Right lobe of liver (tissue), 6 donors: ENCODE measurements at regions of chr20 and their contacts with region 1.

Region 1: DNA sequence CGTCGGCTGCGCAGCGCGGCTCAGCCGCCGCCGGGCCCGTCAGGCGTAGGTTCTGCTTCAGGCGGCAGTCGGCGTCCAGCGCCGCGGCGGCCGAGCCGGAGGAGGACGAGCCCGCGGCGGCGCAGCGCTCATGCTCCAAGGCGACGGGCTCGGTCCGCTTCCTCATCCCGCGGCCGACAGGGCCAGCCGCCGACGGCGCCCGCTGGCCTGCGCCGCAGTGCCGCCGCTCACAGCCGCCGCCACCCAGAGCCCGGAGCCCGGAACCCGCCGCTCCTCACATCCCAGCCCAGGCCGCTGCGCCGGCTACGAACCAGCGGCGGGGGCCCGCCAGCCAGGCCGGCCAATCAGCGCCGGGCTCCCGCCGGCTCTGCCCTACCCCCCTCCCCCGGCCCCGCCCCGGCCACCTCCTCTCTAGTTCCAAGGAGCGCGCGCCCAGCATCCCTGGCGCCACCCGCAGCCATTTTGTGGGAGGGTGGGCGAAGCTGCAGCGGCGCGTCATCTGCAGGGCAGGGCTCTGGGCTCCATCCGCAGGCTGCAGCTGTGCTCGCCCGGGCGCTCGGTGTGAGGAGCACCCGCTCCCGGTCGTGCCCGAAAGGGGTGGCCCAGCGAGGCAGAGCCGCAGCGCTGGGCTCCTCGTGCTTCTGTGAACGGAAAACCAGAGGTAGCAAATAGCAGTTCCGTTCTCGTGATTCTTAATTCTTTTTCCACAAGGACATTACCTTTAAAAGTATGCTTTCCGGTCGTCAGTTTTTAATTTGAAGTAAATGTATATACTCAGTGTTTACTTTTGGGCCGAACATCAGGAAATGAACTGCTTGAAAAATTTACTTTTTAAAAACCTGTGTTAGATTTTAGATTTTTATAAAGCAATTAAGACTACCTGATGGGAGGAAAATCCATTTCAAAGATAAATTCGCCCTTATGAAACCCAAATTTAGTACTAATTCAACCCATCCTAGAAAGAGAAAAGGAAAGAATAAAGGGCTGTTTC is at the start of gene ABHD12:
- DNase-seq: peak; percentile 97 to 98 (median 98)
- ATAC-seq: peak; percentile 97 to 99 (median 98)
- H3K4me3 ChIP-seq: peak within 1 kb of the TSS; percentile 73 to 91 (median 75)
- H3K27ac ChIP-seq: peak within 1 kb of the TSS; percentile 69 to 75 (median 72)
- H3K4me1 ChIP-seq: peaks cover 0 to 4% (median 0%) of the 10 kb centered on the region in 4 donors
- H3K27me3 ChIP-seq: no peaks in the 10 kb centered on the region
- CTCF ChIP-seq: no peak
- POLR2A ChIP-seq: peak; percentile 88
- total RNA-seq, gene ABHD12: 16.1 to 23.6 (median 18.7) TPM

Region 2: GRCh38 chr20:25309395-25310267 is 81.2 kb before region 1 on chr20:
- intact Hi-C with region 1: loop called in 1 of 2 experiments (anchors 10 kb)
- DNase-seq: peak in 2 of 3 donors; percentile 54 to 66
- ATAC-seq: peak; percentile 37 to 72 (median 50)
- H3K4me3 ChIP-seq: no peak overlapping the region
- H3K27ac ChIP-seq: peak overlapping the region; percentile 61 to 74 (median 70)
- H3K4me1 ChIP-seq: peaks cover 0 to 31% (median 11%) of the 10 kb centered on the region in 4 donors
- H3K27me3 ChIP-seq: no peaks in the 10 kb centered on the region
- CTCF ChIP-seq: no peak
- POLR2A ChIP-seq: no peak

Region 3: GRCh38 chr20:25669826-25670422 is 279.1 kb after region 1 on chr20:
- intact Hi-C with region 1: no loop called
- DNase-seq: no peak
- ATAC-seq: peak in 3 of 4 donors; percentile 12 to 86 (median 35)
- H3K4me3 ChIP-seq: no peak overlapping the region
- H3K27ac ChIP-seq: no peak overlapping the region
- H3K4me1 ChIP-seq: no peaks in the 10 kb centered on the region
- H3K27me3 ChIP-seq: no peaks in the 10 kb centered on the region
- CTCF ChIP-seq: no peak
- POLR2A ChIP-seq: no peak